ENCODE measurements at regions of chr1 and their contacts with region 1.

Region 1: DNA sequence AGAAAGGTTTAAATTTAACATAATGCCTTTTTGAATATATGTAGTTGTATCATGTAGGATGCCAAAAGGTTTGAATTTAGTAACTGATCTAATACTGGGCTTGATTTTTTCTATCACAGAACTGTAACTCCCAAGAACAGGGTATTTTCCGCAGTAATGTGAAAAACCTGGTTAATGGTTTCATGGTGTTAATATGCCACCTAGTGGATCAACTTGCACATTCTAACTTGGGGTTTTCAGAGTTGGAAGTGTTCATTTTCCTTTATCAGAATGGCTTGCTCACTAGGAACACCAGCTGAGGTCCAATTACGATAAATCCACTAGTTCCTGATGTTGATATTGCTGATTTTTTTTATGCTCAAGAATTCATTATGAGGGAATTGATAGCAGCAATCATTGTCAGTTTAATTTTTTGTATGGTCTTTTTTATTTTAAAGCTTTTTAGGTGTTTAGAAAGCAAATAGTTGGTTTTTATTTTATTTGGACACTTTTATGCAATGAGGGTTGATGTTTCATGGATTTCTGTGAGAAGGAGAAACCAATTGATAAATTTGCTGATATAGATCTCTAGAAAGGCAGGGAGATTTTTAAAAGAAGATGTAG is 157.2 kb downstream of the PLA2G4A start:
- DNase-seq: no peak
- ATAC-seq: peak; percentile 71

Region 2: GRCh38 chr1:186605762-186606350 is 380.1 kb before region 1 on chr1:
- intact Hi-C with region 1: loop called in 1 of 2 experiments (anchors 5 kb)
- DNase-seq: peak in 1 of 2 donors; percentile 31
- ATAC-seq: peak; percentile 54

Region 3: GRCh38 chr1:186680245-186681061 is 305.5 kb before region 1 on chr1 and contains the start of gene PTGS2:
- intact Hi-C with region 1: loop called in 1 of 2 experiments (anchors 10 kb)
- DNase-seq: peak; percentile 78 to 81
- ATAC-seq: peak; percentile 99
- total RNA-seq, gene PTGS2: 1.9 to 4.8 TPM

Region 4: DNA sequence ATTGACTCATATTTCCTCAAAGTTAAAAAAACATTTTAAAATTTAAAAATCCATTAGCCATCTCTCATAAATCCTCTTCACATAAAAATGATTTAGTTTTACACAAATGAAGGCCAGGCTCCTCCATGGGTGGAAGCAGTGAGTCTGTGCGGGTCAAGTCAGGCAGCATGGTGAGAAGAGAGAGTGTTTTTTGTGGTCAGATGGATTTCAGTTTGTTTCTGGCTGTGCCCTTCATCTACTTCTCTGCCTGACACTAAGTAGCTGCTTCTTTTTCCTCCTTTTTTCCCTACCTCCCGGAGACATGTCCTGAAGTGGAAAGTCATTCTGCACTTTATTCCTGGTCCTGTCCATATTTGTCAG is 147.0 kb before region 1 on chr1:
- intact Hi-C with region 1: loop called in 1 of 2 experiments (anchors 10 kb)
- DNase-seq: no peak
- ATAC-seq: no peak

Region 5: GRCh38 chr1:186884251-186884650 is 101.7 kb before region 1 on chr1:
- intact Hi-C with region 1: no loop called
- DNase-seq: no peak
- ATAC-seq: no peak

Region 6: GRCh38 chr1:186899577-186899976 is 86.4 kb before region 1 on chr1:
- intact Hi-C with region 1: no loop called
- DNase-seq: no peak
- ATAC-seq: no peak